ENCODE measurements at regions of chr18 and their contacts with region 1.

Region 1: GRCh38 chr18:77054606-77055428 is 77.8 kb downstream of the MBP start:
- DNase-seq: peak; percentile 80 to 89 (median 81)
- H3K4me3 ChIP-seq: no peak overlapping the region
- H3K27ac ChIP-seq: peak overlapping the region in 1 of 2 donors; percentile 32
- H3K4me1 ChIP-seq: peaks cover 6% of the 10 kb centered on the region
- H3K27me3 ChIP-seq: no peaks in the 10 kb centered on the region
- CTCF ChIP-seq: peak; percentile 19 to 80 (median 73)
- EP300 ChIP-seq: no peak
- POLR2A ChIP-seq: no peak

Region 2: DNA sequence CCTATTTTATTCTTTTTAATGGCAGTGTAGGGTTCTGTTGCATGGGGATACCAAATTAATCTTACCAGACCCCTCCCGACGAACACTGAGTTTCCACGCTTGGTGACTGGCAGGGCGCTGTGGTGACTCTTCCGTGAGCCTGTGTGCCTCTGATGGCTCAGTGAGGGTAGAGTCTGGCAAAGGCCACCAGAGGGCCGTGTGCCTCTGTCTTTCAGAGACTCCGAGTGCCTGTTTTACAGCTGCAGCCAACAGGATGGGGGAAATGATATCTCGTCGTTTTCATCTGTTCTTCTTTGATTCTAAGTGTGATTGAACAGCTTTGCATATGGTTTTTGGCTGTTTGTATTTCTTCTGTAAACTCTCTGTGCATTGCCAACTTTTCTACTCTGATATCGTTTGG is 132.7 kb before region 1 on chr18:
- intact Hi-C with region 1: no loop called
- DNase-seq: no peak
- H3K4me3 ChIP-seq: no peak overlapping the region
- H3K27ac ChIP-seq: no peak overlapping the region
- H3K4me1 ChIP-seq: no peaks in the 10 kb centered on the region
- H3K27me3 ChIP-seq: no peaks in the 10 kb centered on the region
- CTCF ChIP-seq: no peak
- EP300 ChIP-seq: no peak
- POLR2A ChIP-seq: no peak

Region 3: GRCh38 chr18:77000527-77000926 is 54.3 kb before region 1 on chr18:
- intact Hi-C with region 1: loop called in 3 of 4 experiments (anchors 2 to 10 kb)
- DNase-seq: peak; percentile 34 to 74 (median 65)
- H3K4me3 ChIP-seq: no peak overlapping the region
- H3K27ac ChIP-seq: no peak overlapping the region
- H3K4me1 ChIP-seq: no peaks in the 10 kb centered on the region
- H3K27me3 ChIP-seq: no peaks in the 10 kb centered on the region
- CTCF ChIP-seq: peak; percentile 82 to 97 (median 88)
- EP300 ChIP-seq: no peak
- POLR2A ChIP-seq: no peak

Measured in ovary (tissue), 10 donors.